ENCODE measurements at regions of chr2 and their contacts with region 1.

Region 1: GRCh38 chr2:190961918-190962487 is 52.0 kb downstream of the STAT1 start:
- DNase-seq: no peak
- ATAC-seq: no peak
- H3K4me3 ChIP-seq: no peak overlapping the region
- H3K4me3 Mint-ChIP-seq: no peak overlapping the region
- H3K27ac ChIP-seq: no peak overlapping the region
- H3K27ac Mint-ChIP-seq: peak overlapping the region; percentile 76
- H3K4me1 ChIP-seq: peaks cover 5% of the 10 kb centered on the region
- H3K4me1 Mint-ChIP-seq: peaks cover 42% of the 10 kb centered on the region
- H3K27me3 ChIP-seq: no peaks in the 10 kb centered on the region
- H3K27me3 Mint-ChIP-seq: no peaks in the 10 kb centered on the region
- CTCF ChIP-seq: no peak

Region 2: GRCh38 chr2:189791338-189792042 is 1170.5 kb before region 1 on chr2:
- CTCF ChIA-PET with region 1: no interaction called
- POLR2A ChIA-PET with region 1: no interaction called
- intact Hi-C with region 1: no loop called
- DNase-seq: peak in 3 of 14 experiments; percentile 57 to 75 (median 65)
- ATAC-seq: no peak
- H3K4me3 ChIP-seq: peak overlapping the region; percentile 42
- H3K4me3 Mint-ChIP-seq: peak overlapping the region; percentile 65
- H3K27ac ChIP-seq: peak overlapping the region in 1 of 2 donors; percentile 35
- H3K27ac Mint-ChIP-seq: peak overlapping the region; percentile 36
- H3K4me1 ChIP-seq: no peaks in the 10 kb centered on the region
- H3K4me1 Mint-ChIP-seq: peaks cover 9% of the 10 kb centered on the region
- H3K27me3 ChIP-seq: no peaks in the 10 kb centered on the region
- H3K27me3 Mint-ChIP-seq: no peaks in the 10 kb centered on the region
- CTCF ChIP-seq: no peak

Region 3: DNA sequence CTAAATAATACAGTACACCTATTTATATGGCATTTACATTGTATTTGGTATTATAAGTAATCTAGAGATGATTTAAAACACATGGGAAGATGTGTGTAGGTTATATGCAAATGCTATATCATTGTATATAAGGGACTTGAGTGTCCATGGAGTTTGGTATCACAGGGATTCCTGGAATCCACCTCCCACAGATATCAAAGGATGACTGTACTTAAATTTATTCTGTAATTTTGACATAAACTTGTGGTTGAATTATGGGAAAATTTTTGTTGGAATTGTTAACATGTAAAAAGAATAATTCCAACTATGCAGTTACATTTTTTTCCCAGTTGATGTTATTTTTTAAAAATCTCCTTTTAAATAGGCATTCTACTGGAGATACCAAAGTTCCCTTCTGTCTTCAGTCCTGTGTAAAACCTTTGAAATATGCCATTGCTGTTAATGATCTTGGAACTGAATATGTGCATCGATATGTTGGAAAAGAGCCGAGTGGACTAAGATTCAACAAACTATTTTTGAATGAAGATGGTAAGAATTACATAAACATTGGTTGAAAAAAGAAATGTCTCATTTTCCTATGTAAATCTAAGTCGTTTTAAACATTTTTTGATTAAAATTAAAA is 57.3 kb before region 1 on chr2:
- CTCF ChIA-PET with region 1: no interaction called
- POLR2A ChIA-PET with region 1: no interaction called
- intact Hi-C with region 1: loop called in 1 of 2 experiments (anchors 5 kb)
- DNase-seq: no peak
- ATAC-seq: no peak
- H3K4me3 ChIP-seq: no peak overlapping the region
- H3K4me3 Mint-ChIP-seq: no peak overlapping the region
- H3K27ac ChIP-seq: no peak overlapping the region
- H3K27ac Mint-ChIP-seq: no peak overlapping the region
- H3K4me1 ChIP-seq: peaks cover 2% of the 10 kb centered on the region
- H3K4me1 Mint-ChIP-seq: peaks cover 11% of the 10 kb centered on the region
- H3K27me3 ChIP-seq: no peaks in the 10 kb centered on the region
- H3K27me3 Mint-ChIP-seq: no peaks in the 10 kb centered on the region
- CTCF ChIP-seq: no peak

Region 4: DNA sequence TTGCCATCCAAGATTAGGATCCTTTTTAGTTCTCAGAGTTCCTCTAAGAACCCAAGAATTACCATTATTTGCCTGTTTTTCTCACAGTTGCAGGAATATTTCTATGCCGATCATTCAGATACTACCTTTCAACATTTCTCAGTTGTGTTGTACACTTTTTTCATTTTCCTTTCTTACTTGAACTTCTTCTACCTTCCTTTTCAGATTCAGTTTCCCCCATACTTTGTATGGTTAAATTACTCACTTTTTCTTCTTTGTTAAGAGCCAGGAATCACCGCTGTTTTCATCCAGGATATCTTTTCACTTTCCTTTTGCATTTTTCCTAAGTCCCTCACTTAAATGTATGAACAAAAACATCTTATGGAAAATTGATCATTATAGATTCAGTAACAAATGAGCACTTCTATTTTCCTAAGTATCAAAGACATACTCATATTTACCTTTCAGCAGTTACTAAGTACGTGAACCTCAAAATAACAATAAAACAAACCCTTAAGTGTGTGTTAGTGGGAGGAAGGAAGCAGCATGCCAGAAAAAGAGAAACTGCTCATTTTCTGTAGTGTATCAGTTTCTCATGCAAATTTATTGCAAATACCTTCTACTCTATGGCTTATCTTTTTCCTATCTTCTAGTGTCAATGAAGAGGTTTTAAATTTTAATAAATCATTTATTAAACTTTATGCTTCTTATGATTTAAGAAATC is 116.3 kb after region 1 on chr2:
- CTCF ChIA-PET with region 1: no interaction called
- POLR2A ChIA-PET with region 1: no interaction called
- intact Hi-C with region 1: no loop called
- DNase-seq: no peak
- ATAC-seq: no peak
- H3K4me3 ChIP-seq: no peak overlapping the region
- H3K4me3 Mint-ChIP-seq: no peak overlapping the region
- H3K27ac ChIP-seq: no peak overlapping the region
- H3K27ac Mint-ChIP-seq: peak overlapping the region; percentile 50
- H3K4me1 ChIP-seq: no peaks in the 10 kb centered on the region
- H3K4me1 Mint-ChIP-seq: peaks cover 20% of the 10 kb centered on the region
- H3K27me3 ChIP-seq: no peaks in the 10 kb centered on the region
- H3K27me3 Mint-ChIP-seq: no peaks in the 10 kb centered on the region
- CTCF ChIP-seq: no peak

Measured in CD4-positive, alpha-beta T cell (primary cell).